ENCODE measurements at regions of chr21 and their contacts with region 1.

Region 1: GRCh38 chr21:42833439-42833815 is 45.9 kb downstream of the WDR4 start:
- DNase-seq: peak; percentile 36
- H3K4me3 Mint-ChIP-seq: no peak overlapping the region
- H3K27ac Mint-ChIP-seq: no peak overlapping the region
- H3K4me1 Mint-ChIP-seq: no peaks in the 10 kb centered on the region
- H3K27me3 Mint-ChIP-seq: no peaks in the 10 kb centered on the region
- CTCF ChIP-seq: no peak

Region 2: GRCh38 chr21:42593007-42593806 is 240.2 kb before region 1 on chr21:
- CTCF ChIA-PET with region 1: no interaction called
- intact Hi-C with region 1: loop called (anchors 5 kb)
- DNase-seq: peak; percentile 77
- H3K4me3 Mint-ChIP-seq: no peak overlapping the region
- H3K27ac Mint-ChIP-seq: no peak overlapping the region
- H3K4me1 Mint-ChIP-seq: no peaks in the 10 kb centered on the region
- H3K27me3 Mint-ChIP-seq: no peaks in the 10 kb centered on the region
- CTCF ChIP-seq: peak; percentile 63

Region 3: GRCh38 chr21:42652527-42653230 is 180.7 kb before region 1 on chr21:
- CTCF ChIA-PET with region 1: no interaction called
- intact Hi-C with region 1: loop called (anchors 5 kb)
- DNase-seq: peak; percentile 74
- H3K4me3 Mint-ChIP-seq: peak overlapping the region; percentile 66
- H3K27ac Mint-ChIP-seq: no peak overlapping the region
- H3K4me1 Mint-ChIP-seq: peaks cover 19% of the 10 kb centered on the region
- H3K27me3 Mint-ChIP-seq: peaks cover 13% of the 10 kb centered on the region
- CTCF ChIP-seq: peak; percentile 46

Region 4: GRCh38 chr21:42781150-42781970 is 52.1 kb before region 1 on chr21:
- CTCF ChIA-PET with region 1: interaction called, 12 read pairs
- intact Hi-C with region 1: no loop called
- DNase-seq: peak; percentile 41
- H3K4me3 Mint-ChIP-seq: peak overlapping the region; percentile 60
- H3K27ac Mint-ChIP-seq: no peak overlapping the region
- H3K4me1 Mint-ChIP-seq: no peaks in the 10 kb centered on the region
- H3K27me3 Mint-ChIP-seq: peaks cover 35% of the 10 kb centered on the region
- CTCF ChIP-seq: no peak

Region 5: GRCh38 chr21:42790520-42791065 is 42.8 kb before region 1 on chr21:
- CTCF ChIA-PET with region 1: no interaction called
- intact Hi-C with region 1: loop called (anchors 5 kb)
- DNase-seq: no peak
- H3K4me3 Mint-ChIP-seq: no peak overlapping the region
- H3K27ac Mint-ChIP-seq: no peak overlapping the region
- H3K4me1 Mint-ChIP-seq: no peaks in the 10 kb centered on the region
- H3K27me3 Mint-ChIP-seq: no peaks in the 10 kb centered on the region
- CTCF ChIP-seq: no peak

Region 6: DNA sequence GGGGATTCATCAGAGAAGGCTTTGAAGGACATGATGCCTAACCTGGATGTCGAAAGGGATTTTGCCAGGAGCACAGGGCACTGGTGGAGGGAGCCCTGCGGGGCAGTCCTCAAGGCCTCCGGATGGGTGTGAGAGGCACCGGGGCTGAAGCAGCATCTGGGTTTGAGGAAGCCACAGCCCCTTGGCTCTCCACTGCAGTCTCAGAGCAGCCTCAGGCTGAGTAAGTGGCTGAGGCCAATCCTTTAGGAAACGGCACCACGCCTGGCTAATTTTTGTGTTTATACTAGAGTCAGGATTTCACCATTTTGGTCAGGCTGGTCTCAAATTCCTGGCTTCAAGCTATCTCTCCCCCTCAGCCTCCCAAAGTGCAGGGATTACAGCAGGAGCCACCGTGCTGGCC is 80.0 kb after region 1 on chr21:
- CTCF ChIA-PET with region 1: no interaction called
- intact Hi-C with region 1: no loop called
- DNase-seq: no peak
- H3K4me3 Mint-ChIP-seq: no peak overlapping the region
- H3K27ac Mint-ChIP-seq: no peak overlapping the region
- H3K4me1 Mint-ChIP-seq: no peaks in the 10 kb centered on the region
- H3K27me3 Mint-ChIP-seq: no peaks in the 10 kb centered on the region
- CTCF ChIP-seq: no peak

Measured in Calu3 (cell line).